CD4-positive, alpha-beta T cell (primary cell): ENCODE measurements at regions of chr1 and their contacts with region 1.

Region 1: DNA sequence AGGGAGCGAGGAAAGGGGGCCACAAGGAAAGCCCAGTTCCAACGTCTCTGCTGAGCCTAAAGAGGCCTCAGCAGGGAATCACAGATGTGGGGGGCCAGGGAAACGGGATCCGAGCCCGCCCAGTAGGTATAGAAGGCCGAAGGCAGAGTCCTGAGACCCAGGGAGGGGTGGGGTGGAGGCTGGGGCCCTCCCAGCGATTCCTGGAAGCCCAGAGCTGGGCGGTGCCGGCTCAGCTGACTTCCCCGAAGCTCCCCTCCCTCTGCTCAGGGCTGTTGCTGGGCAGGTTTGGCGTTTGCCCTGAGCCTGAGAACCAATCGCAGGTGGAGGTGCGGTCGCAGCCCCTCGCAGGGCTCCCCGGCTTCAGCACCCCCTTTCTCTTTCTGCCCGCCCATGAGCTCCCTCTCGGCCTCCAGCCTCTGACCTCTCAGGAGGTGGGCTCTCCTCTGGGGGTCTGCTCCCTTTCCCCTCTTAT is 12.8 kb downstream of the ADAMTSL4 start:
- DNase-seq: peak; percentile 69 to 93 (median 84)
- ATAC-seq: peak; percentile 47
- H3K4me3 ChIP-seq: peak overlapping the region; percentile 90
- H3K4me3 Mint-ChIP-seq: peak overlapping the region; percentile 96
- H3K27ac ChIP-seq: peak overlapping the region; percentile 92 to 97
- H3K27ac Mint-ChIP-seq: peak overlapping the region; percentile 98
- H3K4me1 ChIP-seq: peaks cover 89% of the 10 kb centered on the region
- H3K4me1 Mint-ChIP-seq: peaks cover 63% of the 10 kb centered on the region
- H3K27me3 ChIP-seq: no peaks in the 10 kb centered on the region
- H3K27me3 Mint-ChIP-seq: no peaks in the 10 kb centered on the region
- CTCF ChIP-seq: no peak

Region 2: GRCh38 chr1:150548632-150549495 is 13.1 kb before region 1 on chr1 and contains the start of gene ADAMTSL4:
- CTCF ChIA-PET with region 1: interaction called, 12 read pairs
- POLR2A ChIA-PET with region 1: interaction called, 11 read pairs
- intact Hi-C with region 1: no loop called
- DNase-seq: peak in 4 of 14 experiments; percentile 36 to 70 (median 58)
- ATAC-seq: peak; percentile 76
- H3K4me3 ChIP-seq: peak within 1 kb of the TSS; percentile 49
- H3K4me3 Mint-ChIP-seq: peak within 1 kb of the TSS; percentile 82
- H3K27ac ChIP-seq: no peak within 1 kb of the TSS
- H3K27ac Mint-ChIP-seq: no peak within 1 kb of the TSS
- H3K4me1 ChIP-seq: peaks cover 39% of the 10 kb centered on the region
- H3K4me1 Mint-ChIP-seq: peaks cover 23% of the 10 kb centered on the region
- H3K27me3 ChIP-seq: peaks cover 10 to 15% of the 10 kb centered on the region in 2 experiments
- H3K27me3 Mint-ChIP-seq: peaks cover 34% of the 10 kb centered on the region
- CTCF ChIP-seq: no peak
- total RNA-seq, gene ADAMTSL4: 0.16 to 0.22 TPM

Region 3: DNA sequence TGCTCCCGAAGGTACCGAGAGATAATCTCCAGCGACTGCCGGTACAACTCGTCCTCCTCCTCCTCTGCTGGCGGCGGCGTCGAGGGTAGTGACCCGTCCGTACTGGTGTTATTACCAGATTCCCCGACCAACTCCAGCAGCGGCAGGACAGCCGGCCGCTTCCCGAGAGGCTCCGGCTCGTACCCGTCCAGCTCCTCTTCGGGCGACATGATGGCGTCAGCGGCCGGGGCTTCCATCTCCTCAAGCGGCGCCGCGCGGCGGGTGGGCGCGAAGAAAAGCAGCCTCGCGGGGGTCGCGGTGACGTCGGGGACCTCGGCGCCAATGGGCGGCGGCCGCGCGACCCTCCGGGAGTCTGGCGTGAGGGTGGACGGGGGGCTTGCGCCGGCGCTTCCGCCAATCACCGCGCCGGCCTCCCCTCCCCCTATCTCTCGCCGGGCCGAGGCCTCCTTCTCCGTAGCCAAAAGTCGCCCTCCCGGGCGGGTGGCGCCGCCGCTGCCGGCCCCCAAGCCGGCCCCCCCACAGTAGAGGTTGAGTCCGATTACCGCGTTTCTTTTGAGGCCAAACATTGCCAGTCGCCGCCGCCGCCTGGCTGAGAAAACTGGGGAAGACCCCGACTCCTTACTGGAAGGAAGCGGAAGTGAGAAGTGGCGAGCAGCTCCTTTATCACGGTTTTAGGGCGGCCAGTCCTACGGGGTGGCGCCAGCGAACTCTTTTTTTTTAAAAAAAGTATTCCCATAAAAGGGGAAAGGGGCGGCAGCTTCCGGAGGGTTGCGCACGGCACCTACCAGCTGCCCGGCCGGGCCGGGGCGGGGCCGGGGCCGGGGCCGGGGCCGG is 17.2 kb after region 1 on chr1 and contains the start of gene MCL1:
- CTCF ChIA-PET with region 1: interaction called, 183 read pairs
- POLR2A ChIA-PET with region 1: interaction called, 1,538 read pairs
- intact Hi-C with region 1: loop called (anchors 1 kb)
- DNase-seq: peak; percentile 70 to 95 (median 82)
- ATAC-seq: peak; percentile 63
- H3K4me3 ChIP-seq: peak within 1 kb of the TSS; percentile 84
- H3K4me3 Mint-ChIP-seq: peak within 1 kb of the TSS; percentile 99
- H3K27ac ChIP-seq: peak within 1 kb of the TSS; percentile 93 to 97
- H3K27ac Mint-ChIP-seq: peak within 1 kb of the TSS; percentile 98
- H3K4me1 ChIP-seq: peaks cover 22% of the 10 kb centered on the region
- H3K4me1 Mint-ChIP-seq: peaks cover 41% of the 10 kb centered on the region
- H3K27me3 ChIP-seq: no peaks in the 10 kb centered on the region
- H3K27me3 Mint-ChIP-seq: no peaks in the 10 kb centered on the region
- CTCF ChIP-seq: no peak
- total RNA-seq, gene MCL1: 737 to 747 TPM

Region 4: GRCh38 chr1:150621497-150622302 is 59.7 kb after region 1 on chr1:
- CTCF ChIA-PET with region 1: interaction called, 131 read pairs
- POLR2A ChIA-PET with region 1: interaction called, 501 read pairs
- intact Hi-C with region 1: loop called (anchors 1 kb)
- DNase-seq: peak; percentile 45 to 85 (median 58)
- ATAC-seq: peak; percentile 78
- H3K4me3 ChIP-seq: no peak overlapping the region
- H3K4me3 Mint-ChIP-seq: peak overlapping the region; percentile 4
- H3K27ac ChIP-seq: peak overlapping the region; percentile 23 to 38
- H3K27ac Mint-ChIP-seq: peak overlapping the region; percentile 73
- H3K4me1 ChIP-seq: peaks cover 30% of the 10 kb centered on the region
- H3K4me1 Mint-ChIP-seq: peaks cover 60% of the 10 kb centered on the region
- H3K27me3 ChIP-seq: no peaks in the 10 kb centered on the region
- H3K27me3 Mint-ChIP-seq: no peaks in the 10 kb centered on the region
- CTCF ChIP-seq: peak; percentile 67

Region 5: DNA sequence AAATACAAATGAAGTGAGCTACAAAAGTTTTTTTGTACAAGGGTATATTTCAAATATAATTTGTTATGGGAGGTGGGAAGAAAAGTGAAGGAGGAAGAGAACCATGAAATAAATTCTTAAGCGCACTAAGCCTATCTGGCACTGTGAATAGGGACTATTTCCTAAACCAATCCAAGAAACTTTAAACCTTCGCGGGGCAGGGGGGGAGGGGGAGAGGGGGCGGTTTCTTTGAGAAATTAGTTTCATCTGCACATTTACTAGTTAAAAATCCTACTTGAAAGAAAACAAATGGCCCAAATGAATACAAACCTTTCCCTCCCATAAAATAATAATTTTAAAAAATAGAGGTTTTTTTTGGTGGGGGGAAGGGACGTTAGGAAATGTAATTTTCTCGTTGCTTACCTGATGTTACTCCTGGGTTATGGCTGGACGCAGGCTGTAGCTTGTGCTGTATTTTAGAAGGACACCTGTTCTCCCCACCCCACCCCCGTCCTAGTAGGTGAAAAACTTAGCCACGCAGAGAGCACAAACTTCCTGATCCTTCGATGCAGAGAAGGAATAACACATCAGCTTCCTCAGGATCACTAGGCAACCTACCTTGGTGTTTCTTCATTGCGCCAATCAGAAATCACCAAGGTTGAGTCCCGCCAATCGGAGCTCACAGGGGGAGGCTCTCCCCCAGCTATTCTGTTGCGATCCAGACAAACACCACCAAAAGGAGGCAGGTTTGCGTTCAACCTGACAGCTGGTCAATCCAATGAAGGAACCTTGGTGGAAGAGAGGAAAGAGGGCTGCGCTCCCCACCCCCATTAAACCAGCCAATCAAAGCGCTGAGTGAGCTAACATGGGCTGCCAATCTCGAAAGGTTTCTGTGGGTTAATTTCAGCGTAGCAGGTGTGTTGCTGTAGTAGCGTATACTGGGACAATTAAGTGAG is 134.8 kb after region 1 on chr1 and contains the start of gene GOLPH3L:
- CTCF ChIA-PET with region 1: interaction called, 13 read pairs
- POLR2A ChIA-PET with region 1: interaction called, 17 read pairs
- intact Hi-C with region 1: loop called in 1 of 2 experiments (anchors 5 kb)
- DNase-seq: peak; percentile 73 to 98 (median 83)
- ATAC-seq: peak; percentile 99
- H3K4me3 ChIP-seq: peak within 1 kb of the TSS; percentile 69
- H3K4me3 Mint-ChIP-seq: peak within 1 kb of the TSS; percentile 94
- H3K27ac ChIP-seq: peak within 1 kb of the TSS; percentile 39 to 62
- H3K27ac Mint-ChIP-seq: peak within 1 kb of the TSS; percentile 88
- H3K4me1 ChIP-seq: no peaks in the 10 kb centered on the region
- H3K4me1 Mint-ChIP-seq: peaks cover 40% of the 10 kb centered on the region
- H3K27me3 ChIP-seq: no peaks in the 10 kb centered on the region
- H3K27me3 Mint-ChIP-seq: peaks cover 4% of the 10 kb centered on the region
- CTCF ChIP-seq: no peak
- total RNA-seq, gene GOLPH3L: 2.4 to 2.6 TPM